ENCODE measurements at regions of chr11 and their contacts with region 1.

Region 1: DNA sequence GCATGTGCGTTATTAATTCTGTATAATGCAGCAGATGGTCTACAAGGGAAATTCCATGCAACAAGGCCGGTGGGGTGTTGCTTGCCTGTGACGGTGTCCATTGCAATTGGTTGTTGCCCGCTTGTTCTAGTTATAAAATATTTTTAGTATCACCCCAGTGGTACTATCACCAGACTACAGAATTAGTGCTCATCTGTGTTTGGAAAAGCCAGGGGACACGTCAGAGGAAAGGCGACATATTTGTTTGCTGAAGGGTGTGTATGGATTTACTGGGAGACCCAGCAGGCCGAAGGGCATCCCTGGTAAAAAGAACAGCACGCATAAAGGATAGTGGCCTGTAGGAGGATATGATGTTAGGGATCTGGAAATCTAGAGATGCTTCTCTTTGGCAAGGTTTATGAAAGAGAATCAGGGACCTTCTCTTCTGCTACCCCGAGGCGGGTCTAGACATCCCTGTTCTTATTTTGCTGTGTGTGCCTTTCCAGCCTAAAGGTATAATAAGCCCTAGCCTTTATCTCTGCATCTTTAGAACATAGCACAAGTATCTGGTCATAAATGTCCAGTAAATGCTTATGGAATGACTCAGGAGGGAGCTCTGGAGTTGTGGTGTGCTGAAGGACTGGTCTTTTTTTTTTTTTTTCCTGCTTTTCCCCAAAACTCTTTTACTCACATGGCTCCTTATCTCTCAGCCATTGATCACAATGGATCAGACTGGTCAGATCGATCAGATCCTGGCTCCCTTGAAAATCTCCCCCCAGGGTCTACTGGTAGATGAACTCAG is 90.9 kb downstream of the LDLRAD3 start:
- DNase-seq: no peak
- ATAC-seq: no peak
- H3K4me3 ChIP-seq: no peak overlapping the region
- H3K27ac ChIP-seq: no peak overlapping the region
- H3K4me1 ChIP-seq: peaks cover 0 to 28% (median 0%) of the 10 kb centered on the region in 9 donors
- H3K27me3 ChIP-seq: peaks cover 0 to 3% (median 0%) of the 10 kb centered on the region in 7 donors
- CTCF ChIP-seq: no peak

Region 2: GRCh38 chr11:35969089-35970042 is 65.4 kb before region 1 on chr11:
- intact Hi-C with region 1: loop called in 1 of 10 experiments (anchors 10 kb)
- DNase-seq: no peak
- ATAC-seq: no peak
- H3K4me3 ChIP-seq: no peak overlapping the region
- H3K27ac ChIP-seq: no peak overlapping the region
- H3K4me1 ChIP-seq: peaks cover 0 to 30% (median 7%) of the 10 kb centered on the region in 9 donors
- H3K27me3 ChIP-seq: no peaks in the 10 kb centered on the region
- CTCF ChIP-seq: no peak

Region 3: DNA sequence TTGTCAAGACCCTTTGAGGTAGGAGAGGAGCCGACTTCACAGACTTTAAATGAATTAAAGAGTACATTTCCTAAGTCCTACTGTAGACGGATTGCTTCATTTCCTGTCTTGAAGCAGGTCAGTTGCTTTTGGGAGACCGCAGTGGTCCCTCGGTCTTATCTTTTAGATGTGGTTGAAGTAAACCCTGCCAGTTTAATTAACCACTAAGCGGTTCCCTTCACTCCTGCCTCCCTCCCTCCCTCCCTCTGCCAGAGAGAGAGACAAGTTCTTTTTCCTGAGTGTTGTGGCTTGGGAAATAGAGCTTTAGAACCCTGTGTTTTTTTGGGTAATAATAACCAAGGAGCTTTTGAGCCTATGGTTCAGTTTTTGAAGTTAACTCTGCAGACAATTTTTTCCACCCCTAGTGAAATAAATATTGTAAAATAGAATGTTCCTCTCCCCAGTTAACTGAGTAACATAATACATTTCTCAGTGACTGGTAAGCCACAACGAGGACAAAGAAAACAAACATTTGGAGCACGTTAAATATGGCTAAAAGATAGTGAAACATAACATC is 56.6 kb after region 1 on chr11:
- intact Hi-C with region 1: no loop called
- DNase-seq: no peak
- ATAC-seq: peak in 2 of 8 donors; percentile 19 to 40
- H3K4me3 ChIP-seq: no peak overlapping the region
- H3K27ac ChIP-seq: peak overlapping the region in 1 of 10 donors; percentile 3
- H3K4me1 ChIP-seq: peaks cover 0 to 23% (median 5%) of the 10 kb centered on the region in 9 donors
- H3K27me3 ChIP-seq: peaks cover 0 to 13% (median 0%) of the 10 kb centered on the region in 7 donors
- CTCF ChIP-seq: no peak

Measured in heart right ventricle (tissue), 16 donors.